Cardiac septum (tissue), 1 donor: ENCODE measurements at regions of chr3 and their contacts with region 1.

Region 1: DNA sequence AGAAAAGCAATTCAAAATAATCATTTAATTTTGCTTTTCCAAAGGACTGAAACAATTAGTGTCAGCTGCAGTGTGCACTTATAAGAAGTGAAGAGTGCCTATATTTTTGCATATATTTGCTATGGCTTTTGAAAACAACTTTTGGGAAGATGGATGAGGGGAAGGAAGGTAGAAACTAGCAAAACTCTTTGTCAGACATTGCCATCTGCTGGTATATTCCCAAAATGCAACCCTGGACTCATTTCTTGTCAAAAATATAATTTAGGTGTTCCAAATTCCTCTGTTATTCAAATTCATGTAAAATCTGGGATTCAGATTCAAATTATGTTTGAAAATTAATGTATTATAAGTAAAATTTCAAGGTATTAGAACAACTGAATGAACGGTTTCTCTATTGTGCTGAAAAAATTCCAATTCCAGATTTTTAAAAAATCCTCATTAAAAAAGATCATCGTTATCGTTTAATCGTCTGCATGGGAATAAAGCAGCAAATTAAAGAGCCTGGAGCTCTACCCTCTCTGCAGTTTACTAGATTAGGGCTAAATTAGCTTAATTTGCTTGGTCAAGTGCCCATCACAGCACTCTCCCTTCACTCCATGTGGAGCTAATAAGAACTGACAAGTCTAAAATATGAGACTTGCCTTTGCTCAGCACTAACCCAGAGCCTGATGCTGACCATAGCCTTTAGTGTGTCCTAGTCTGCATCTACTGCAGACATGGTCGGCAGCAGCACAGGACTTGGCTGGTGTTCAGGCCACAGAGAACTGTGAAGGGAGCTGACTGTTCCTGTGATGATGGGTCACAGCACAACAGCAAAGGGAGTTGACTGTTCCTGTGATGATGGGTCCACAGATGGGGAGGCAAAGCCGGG is 67.9 kb upstream of the MITF start:
- DNase-seq: no peak

Region 2: GRCh38 chr3:69161587-69162307 is 509.6 kb before region 1 on chr3:
- intact Hi-C with region 1: loop called (anchors 5 kb)
- DNase-seq: no peak